ENCODE measurements at regions of chr12 and their contacts with region 1.

Region 1: DNA sequence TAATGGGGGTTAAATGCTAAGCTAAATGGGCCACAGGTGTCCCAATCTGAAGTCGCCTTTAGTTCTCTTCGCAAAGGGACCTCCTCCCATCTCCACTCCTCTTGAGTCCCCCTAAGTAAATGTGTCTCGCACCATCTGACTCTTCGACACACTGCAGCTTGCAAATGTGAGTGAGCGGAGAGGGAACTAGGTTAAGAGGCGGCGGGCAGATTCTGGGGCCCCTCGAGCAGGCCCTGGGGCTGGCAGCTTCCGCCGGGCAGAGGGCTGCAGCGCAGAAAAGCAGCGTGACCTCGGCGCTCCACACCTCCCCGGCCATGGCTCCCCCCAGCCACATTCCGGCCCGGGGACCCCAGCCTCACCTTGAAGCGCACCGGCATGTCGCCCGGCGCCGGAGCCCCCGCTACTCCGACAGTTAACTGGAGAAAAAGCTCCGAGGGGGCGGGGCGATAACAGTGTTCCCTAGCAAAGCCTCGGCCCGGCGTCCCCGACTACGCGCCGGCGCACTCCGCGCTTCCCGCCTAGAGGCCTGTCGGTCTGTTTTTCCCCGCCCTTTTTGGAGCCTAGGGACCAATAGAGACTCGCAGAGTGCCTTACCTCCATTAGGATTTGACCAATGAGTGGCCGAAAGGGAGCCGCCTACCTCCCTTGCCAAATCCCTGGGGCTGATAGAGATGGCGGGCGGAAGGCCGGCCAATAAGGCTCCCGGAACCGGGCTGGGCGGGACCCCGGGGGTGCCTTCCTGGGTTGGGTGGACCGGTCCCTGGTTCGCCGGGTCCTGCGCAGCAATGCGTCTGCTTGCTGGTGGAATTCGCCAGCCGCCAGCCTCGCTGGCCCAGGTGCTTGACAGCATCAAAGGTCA is at the start of gene MDM1:
- DNase-seq: peak; percentile 97
- H3K4me3 Mint-ChIP-seq: peak within 1 kb of the TSS; percentile 85
- H3K27ac Mint-ChIP-seq: peak within 1 kb of the TSS; percentile 71
- H3K4me1 Mint-ChIP-seq: peaks cover 31% of the 10 kb centered on the region
- H3K27me3 Mint-ChIP-seq: peaks cover 2% of the 10 kb centered on the region
- total RNA-seq, gene MDM1: 13.8 to 15.6 TPM

Region 2: GRCh38 chr12:67957383-67957782 is 374.7 kb before region 1 on chr12:
- CTCF ChIA-PET with region 1: no interaction called
- POLR2A ChIA-PET with region 1: no interaction called
- intact Hi-C with region 1: no loop called
- DNase-seq: no peak
- H3K4me3 Mint-ChIP-seq: no peak overlapping the region
- H3K27ac Mint-ChIP-seq: no peak overlapping the region
- H3K4me1 Mint-ChIP-seq: no peaks in the 10 kb centered on the region
- H3K27me3 Mint-ChIP-seq: no peaks in the 10 kb centered on the region

Region 3: DNA sequence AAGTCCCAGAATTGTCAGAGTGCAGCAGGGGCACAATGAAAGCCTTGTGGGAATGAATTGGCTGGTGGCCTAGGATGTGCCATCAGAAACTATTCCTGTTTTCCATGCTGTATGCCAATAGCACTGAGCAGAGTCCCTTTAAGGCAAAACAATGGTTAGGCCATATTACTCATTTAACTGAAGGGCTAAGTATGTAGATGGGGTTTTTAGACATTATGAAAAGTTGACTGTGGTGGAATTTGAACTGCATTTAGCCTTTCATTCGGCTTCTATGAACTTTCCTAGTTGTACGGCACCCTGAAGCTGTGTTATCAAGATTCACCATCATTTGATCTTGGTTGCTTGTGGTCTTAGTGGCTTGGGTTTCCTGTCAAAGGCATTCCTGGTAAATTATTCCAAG is 131.2 kb before region 1 on chr12:
- CTCF ChIA-PET with region 1: no interaction called
- POLR2A ChIA-PET with region 1: no interaction called
- intact Hi-C with region 1: no loop called
- DNase-seq: no peak
- H3K4me3 Mint-ChIP-seq: no peak overlapping the region
- H3K27ac Mint-ChIP-seq: no peak overlapping the region
- H3K4me1 Mint-ChIP-seq: peaks cover 41% of the 10 kb centered on the region
- H3K27me3 Mint-ChIP-seq: no peaks in the 10 kb centered on the region

Region 4: DNA sequence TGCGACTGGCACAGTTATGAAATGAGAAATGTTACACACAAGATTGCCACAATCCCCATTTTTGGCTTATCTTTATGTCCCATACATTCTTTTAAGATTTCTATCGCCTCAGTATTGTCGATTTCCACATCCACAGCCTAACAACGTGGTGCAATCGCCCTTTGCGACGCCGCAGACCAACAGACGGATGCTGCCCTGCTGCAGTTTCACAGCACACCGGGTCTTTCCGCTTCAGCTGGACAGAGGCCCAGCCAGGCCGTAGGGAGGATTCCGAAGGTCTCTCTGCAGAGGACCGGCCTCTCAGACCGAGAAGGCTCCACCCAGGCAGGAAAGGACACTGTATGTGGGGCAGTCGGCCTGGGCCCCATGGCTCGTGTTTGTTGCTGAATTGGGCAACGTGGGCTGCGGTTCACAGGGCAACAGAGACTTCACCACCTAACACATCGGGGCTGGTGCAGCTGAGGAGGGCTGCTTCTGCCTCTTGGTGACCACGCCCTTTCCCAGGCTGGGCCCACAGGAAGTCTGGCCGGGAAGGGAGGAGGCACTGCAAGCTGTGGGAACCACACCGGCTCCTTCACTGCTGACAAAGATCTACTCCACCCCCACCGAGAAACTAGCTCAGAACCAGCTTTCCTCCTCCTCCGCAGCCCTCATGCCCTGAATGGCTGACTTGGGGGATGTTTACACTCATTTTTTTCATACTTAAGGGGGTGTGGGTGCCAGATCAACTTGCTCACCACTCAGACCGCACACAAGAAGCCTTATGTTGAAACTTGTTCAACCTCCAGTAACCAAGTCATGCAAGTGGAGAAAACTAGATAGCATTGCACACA is 33.0 kb after region 1 on chr12:
- CTCF ChIA-PET with region 1: interaction called, 7 read pairs
- POLR2A ChIA-PET with region 1: interaction called, 4 read pairs
- intact Hi-C with region 1: loop called (anchors 2 kb)
- DNase-seq: peak; percentile 94
- H3K4me3 Mint-ChIP-seq: peak overlapping the region; percentile 79
- H3K27ac Mint-ChIP-seq: peak overlapping the region; percentile 92
- H3K4me1 Mint-ChIP-seq: peaks cover 53% of the 10 kb centered on the region
- H3K27me3 Mint-ChIP-seq: no peaks in the 10 kb centered on the region

Region 5: DNA sequence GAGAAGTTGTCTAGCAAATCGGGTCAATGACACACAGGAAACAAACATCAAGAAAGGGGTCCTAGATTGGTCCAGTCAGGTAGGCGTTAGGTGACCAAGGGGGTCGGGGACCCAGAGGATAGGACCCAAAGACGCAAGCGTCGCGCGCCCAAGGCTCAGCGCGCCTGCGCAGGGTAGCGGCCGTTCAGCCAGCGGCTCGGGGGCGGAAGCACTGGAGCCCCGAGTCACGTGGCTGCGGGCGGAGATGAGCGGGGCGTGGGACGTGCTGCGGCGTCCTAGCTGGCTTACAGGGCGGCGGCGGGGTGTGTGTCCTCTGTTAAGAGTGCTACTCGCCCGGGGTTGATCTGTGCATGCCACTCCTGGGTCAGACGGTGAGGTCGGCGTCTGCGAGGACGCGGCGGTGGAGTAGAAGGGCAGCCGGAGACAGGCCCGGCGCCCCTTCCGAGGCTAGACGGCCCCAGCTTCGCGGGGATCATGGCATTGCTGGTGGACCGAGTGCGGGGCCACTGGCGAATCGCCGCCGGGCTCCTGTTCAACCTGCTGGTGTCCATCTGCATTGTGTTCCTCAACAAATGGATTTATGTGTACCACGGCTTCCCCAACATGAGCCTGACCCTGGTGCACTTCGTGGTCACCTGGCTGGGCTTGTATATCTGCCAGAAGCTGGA is 413.9 kb after region 1 on chr12 and contains the start of gene SLC35E3:
- CTCF ChIA-PET with region 1: no interaction called
- POLR2A ChIA-PET with region 1: no interaction called
- intact Hi-C with region 1: loop called (anchors 1 kb)
- DNase-seq: peak; percentile 96
- H3K4me3 Mint-ChIP-seq: peak within 1 kb of the TSS; percentile 92
- H3K27ac Mint-ChIP-seq: peak within 1 kb of the TSS; percentile 64
- H3K4me1 Mint-ChIP-seq: peaks cover 23% of the 10 kb centered on the region
- H3K27me3 Mint-ChIP-seq: no peaks in the 10 kb centered on the region
- total RNA-seq, gene SLC35E3: 4.1 to 5.3 TPM

Measured in activated CD4-positive, alpha-beta memory T cell treated with anti-CD3 and anti-CD28 coated beads for 36 hours (primary cell).